IMR-90 (cell line): ENCODE measurements at regions of chr6 and their contacts with region 1.

Region 1: GRCh38 chr6:109482905-109483735 is at the start of gene ZBTB24:
- DNase-seq: peak; percentile 80
- ATAC-seq: peak; percentile 94
- H3K4me3 ChIP-seq: peak within 1 kb of the TSS; percentile 76
- H3K27ac ChIP-seq: no peak within 1 kb of the TSS; the same call in 1 of the 2 replicates
- H3K4me1 ChIP-seq: peaks cover 3% of the 10 kb centered on the region; the same call in 1 of the 2 replicates
- H3K27me3 ChIP-seq: no peaks in the 10 kb centered on the region; the same call in 1 of the 2 replicates
- CTCF ChIP-seq: no peak
- POLR2A ChIP-seq: peak; percentile 67; the same call in 1 of the 2 replicates
- RAD21 ChIP-seq: no peak
- total RNA-seq, gene ZBTB24: 7.9 and 10.3 TPM in 2 replicates

Region 2: DNA sequence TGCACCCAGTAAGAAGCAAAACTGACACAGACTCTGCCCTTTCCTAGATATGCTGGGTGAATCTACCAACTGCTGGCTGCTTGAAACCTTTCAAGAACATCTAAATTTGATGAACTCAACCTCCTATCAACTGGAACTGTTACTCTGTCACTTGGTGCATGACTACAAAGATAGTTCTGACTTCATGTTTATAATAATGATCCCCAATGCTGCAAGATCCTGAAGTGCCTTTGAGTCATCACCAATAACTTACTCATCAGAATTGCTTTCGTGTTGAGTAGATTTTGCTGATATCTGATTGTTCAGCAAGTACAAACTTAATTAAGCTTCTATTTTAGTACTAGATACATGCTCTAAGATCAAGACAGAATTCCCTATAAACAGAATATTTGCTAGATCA is 735.1 kb before region 1 on chr6:
- CTCF ChIA-PET with region 1: no interaction called
- POLR2A ChIA-PET with region 1: interaction called, 14 read pairs
- dilution Hi-C with region 1: no loop called
- in situ Hi-C with region 1: no loop called
- intact Hi-C with region 1: no loop called
- DNase-seq: peak; percentile 49
- ATAC-seq: no peak
- H3K4me3 ChIP-seq: no peak overlapping the region
- H3K27ac ChIP-seq: no peak overlapping the region
- H3K4me1 ChIP-seq: no peaks in the 10 kb centered on the region
- H3K27me3 ChIP-seq: no peaks in the 10 kb centered on the region
- CTCF ChIP-seq: no peak
- POLR2A ChIP-seq: no peak
- RAD21 ChIP-seq: no peak

Region 3: DNA sequence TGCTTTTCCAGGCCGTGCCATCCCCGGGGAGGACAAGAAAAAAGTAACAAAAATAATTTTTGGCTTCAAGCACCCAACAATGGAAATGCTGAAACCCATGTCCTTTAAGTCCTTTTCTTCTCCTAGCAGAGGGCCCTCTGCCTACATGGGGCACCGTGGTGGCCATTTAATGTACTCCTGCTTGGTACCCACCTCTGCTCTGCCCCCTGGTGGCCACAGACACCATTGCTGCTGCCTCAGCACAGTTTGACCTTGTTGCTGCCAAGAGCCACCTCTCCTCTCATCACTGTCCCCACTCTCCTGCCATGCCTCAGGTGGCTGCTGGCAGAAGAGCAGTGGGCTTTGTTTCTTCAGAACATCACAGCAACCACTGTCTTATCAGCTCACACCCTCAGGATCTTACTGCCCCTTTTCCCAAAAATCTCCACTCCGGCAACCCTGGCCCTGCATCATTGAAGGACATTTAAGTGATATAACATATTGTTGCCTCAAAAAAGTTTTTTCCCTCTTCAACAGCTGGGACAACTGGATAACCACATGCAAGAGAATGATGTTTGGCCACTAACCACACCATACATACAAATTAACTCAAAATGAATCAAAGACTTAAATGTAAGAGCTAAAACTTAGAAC is 647.8 kb before region 1 on chr6:
- CTCF ChIA-PET with region 1: no interaction called
- POLR2A ChIA-PET with region 1: no interaction called
- dilution Hi-C with region 1: no loop called
- in situ Hi-C with region 1: no loop called
- intact Hi-C with region 1: no loop called
- DNase-seq: peak; percentile 72
- ATAC-seq: peak; percentile 90
- H3K4me3 ChIP-seq: no peak overlapping the region
- H3K27ac ChIP-seq: no peak overlapping the region
- H3K4me1 ChIP-seq: peaks cover 6% of the 10 kb centered on the region; the same call in 1 of the 2 replicates
- H3K27me3 ChIP-seq: no peaks in the 10 kb centered on the region; the same call in 1 of the 2 replicates
- CTCF ChIP-seq: peak; percentile 76
- POLR2A ChIP-seq: no peak
- RAD21 ChIP-seq: peak; percentile 80

Region 4: DNA sequence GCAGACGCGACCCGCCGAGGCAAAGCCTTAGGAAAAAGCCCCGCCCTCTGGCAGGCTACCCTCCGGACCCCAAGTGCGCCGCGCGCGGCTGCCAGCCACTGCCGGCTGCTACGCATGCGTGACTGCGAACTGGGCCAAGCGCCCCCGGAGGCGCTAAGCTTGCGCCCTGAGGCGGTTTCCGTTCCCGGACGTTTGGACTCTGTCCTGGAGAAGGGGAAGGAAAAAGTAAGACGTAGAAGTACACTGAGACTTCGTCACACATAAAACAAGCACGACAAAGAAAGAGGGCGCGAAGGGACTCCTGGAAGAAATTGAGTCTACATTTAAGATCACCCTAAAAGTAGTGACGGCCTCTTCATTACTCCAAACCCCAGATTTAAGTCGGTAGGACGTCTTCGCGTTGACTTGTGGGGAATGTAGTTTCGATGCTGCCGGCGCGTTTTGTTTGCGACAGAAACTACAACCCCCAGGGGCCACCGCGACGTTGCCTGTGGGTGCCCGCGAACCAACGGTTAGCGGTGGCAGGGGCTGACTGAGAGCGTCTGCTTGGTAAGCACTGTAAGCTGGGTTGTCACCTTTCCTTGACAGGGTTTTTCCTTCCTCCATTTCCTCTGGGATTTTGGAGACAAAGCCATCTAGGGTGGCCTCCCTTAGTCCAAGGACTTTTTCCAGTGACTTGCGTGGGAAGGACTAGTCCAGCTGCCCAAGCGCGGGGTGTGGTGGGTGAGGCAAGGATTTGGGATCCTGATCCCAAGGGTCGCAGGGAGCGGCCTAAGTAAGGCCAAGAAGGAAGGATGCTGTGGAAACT is 387.9 kb before region 1 on chr6 and contains the start of gene CEP57L1:
- CTCF ChIA-PET with region 1: no interaction called
- POLR2A ChIA-PET with region 1: no interaction called
- dilution Hi-C with region 1: no loop called
- in situ Hi-C with region 1: no loop called
- intact Hi-C with region 1: loop called (anchors 5 kb)
- DNase-seq: peak; percentile 97
- ATAC-seq: peak; percentile 68
- H3K4me3 ChIP-seq: peak within 1 kb of the TSS; percentile 76
- H3K27ac ChIP-seq: peak within 1 kb of the TSS; percentile 89
- H3K4me1 ChIP-seq: peaks cover 3% of the 10 kb centered on the region; the same call in 1 of the 2 replicates
- H3K27me3 ChIP-seq: no peaks in the 10 kb centered on the region
- CTCF ChIP-seq: 0 out of 2 replicates have a peak, but pooled peaks have one; percentile 25
- POLR2A ChIP-seq: peak; percentile 90
- RAD21 ChIP-seq: 0 out of 2 replicates have a peak, but pooled peaks have one; percentile 1
- total RNA-seq, gene CEP57L1: 21.9 and 28.3 TPM in 2 replicates

Region 5: DNA sequence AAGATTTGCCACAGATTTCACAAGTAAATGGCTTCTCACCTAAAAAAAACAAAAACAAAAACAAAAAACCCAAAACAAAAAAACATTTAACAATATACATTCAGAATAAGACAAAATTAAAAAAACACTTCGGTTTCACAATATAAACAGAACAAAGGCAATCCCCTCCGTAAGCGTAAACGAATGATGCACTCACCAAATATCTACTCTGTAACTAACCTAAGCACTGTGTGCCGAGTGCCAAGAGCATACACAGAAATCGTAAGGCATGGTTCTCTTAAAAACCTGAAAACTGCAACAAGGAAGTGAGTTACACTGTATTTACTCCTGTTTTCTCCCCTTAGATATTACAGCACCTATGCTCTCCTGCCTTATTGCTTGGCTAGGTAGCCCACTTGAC is 15.4 kb before region 1 on chr6:
- CTCF ChIA-PET with region 1: no interaction called
- POLR2A ChIA-PET with region 1: no interaction called
- dilution Hi-C with region 1: no loop called
- in situ Hi-C with region 1: no loop called
- intact Hi-C with region 1: no loop called
- DNase-seq: peak; percentile 55
- ATAC-seq: peak; percentile 62
- H3K4me3 ChIP-seq: no peak overlapping the region
- H3K27ac ChIP-seq: no peak overlapping the region
- H3K4me1 ChIP-seq: peaks cover 5% of the 10 kb centered on the region
- H3K27me3 ChIP-seq: no peaks in the 10 kb centered on the region
- CTCF ChIP-seq: no peak
- POLR2A ChIP-seq: no peak
- RAD21 ChIP-seq: no peak